ENCODE measurements at regions of chr6 and their contacts with region 1.

Region 1: GRCh38 chr6:105992315-105992961 is 93.7 kb upstream of the PRDM1 start:
- DNase-seq: peak; percentile 77 to 89 (median 85)
- ATAC-seq: peak; percentile 89 to 91
- H3K4me3 Mint-ChIP-seq: peak overlapping the region; percentile 88 to 98 (median 92)
- H3K27ac Mint-ChIP-seq: peak overlapping the region; percentile 83 to 96 (median 89)
- H3K4me1 Mint-ChIP-seq: peaks cover 17 to 35% (median 25%) of the 10 kb centered on the region in 4 donors
- H3K27me3 Mint-ChIP-seq: peaks cover 43 to 76% (median 64%) of the 10 kb centered on the region in 5 donors

Region 2: DNA sequence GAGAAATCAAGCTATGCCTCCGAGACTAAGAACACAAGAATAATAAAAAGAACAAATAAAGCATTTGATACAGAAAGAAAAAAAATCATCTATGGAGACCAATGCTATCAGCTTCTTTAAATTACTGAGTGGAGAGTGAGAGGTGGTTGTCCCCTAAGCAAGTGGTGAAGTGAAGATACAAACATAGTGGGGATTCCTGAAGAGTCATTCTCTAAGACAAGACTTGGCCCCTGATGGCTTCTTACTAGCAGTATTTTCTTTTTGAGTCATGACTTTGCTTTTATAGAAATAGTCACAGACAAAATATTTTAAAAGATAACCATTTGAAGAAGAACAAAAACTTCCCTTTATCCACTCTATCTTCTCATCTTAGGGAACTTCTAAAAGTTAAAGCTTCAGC is 167.7 kb before region 1 on chr6:
- POLR2A ChIA-PET with region 1: no interaction called
- DNase-seq: no peak
- ATAC-seq: no peak
- H3K4me3 Mint-ChIP-seq: no peak overlapping the region
- H3K27ac Mint-ChIP-seq: no peak overlapping the region
- H3K4me1 Mint-ChIP-seq: no peaks in the 10 kb centered on the region
- H3K27me3 Mint-ChIP-seq: peaks cover 0 to 3% (median 2%) of the 10 kb centered on the region in 5 donors

Region 3: DNA sequence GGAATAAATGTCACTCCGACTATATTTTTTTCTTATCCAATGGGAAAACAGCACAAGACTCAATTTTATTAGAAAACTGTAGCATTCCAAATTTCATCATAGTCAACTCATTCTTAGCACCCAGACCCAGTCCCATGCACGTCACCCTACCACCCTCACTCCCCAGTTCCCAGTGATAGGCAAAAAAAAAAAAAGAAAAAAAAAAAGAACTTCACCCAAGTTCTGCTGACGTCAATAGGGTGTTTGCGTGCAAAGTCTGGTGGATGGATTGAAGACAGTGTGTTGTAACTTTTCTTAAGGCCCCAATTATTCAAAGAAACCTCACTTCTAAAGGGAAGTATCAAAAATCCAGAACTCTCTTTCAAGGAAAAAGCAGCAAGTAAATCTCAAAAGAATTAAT is 120.2 kb before region 1 on chr6:
- POLR2A ChIA-PET with region 1: no interaction called
- DNase-seq: no peak
- ATAC-seq: no peak
- H3K4me3 Mint-ChIP-seq: no peak overlapping the region
- H3K27ac Mint-ChIP-seq: no peak overlapping the region
- H3K4me1 Mint-ChIP-seq: peaks cover 0 to 43% (median 0%) of the 10 kb centered on the region in 4 donors
- H3K27me3 Mint-ChIP-seq: peaks cover 14 to 45% (median 21%) of the 10 kb centered on the region in 5 donors

Region 4: GRCh38 chr6:105920071-105920470 is 72.4 kb before region 1 on chr6:
- POLR2A ChIA-PET with region 1: no interaction called
- DNase-seq: no peak
- ATAC-seq: no peak
- H3K4me3 Mint-ChIP-seq: no peak overlapping the region
- H3K27ac Mint-ChIP-seq: no peak overlapping the region
- H3K4me1 Mint-ChIP-seq: no peaks in the 10 kb centered on the region
- H3K27me3 Mint-ChIP-seq: peaks cover 6 to 11% (median 7%) of the 10 kb centered on the region in 5 donors

Region 5: DNA sequence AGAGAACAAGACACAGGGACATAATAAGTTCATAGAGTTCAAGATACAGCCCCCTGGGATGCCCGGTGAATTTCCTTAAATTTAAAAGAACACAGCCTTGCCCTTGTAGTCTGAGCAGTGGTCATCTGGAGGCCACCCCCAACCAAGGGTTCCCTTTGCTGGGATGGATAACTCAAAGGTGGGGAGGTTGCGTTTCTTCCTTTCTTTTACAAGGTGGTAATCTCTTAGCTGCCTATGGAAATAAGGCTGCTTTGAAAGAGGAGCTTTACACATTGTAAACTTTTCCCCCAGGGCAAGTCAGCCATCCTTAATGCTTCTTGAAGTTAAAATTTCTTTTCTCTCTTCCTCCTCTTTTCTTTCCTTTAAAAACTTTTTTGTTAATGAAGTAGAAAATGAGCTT is 22.5 kb after region 1 on chr6:
- POLR2A ChIA-PET with region 1: no interaction called
- DNase-seq: no peak
- ATAC-seq: no peak
- H3K4me3 Mint-ChIP-seq: no peak overlapping the region
- H3K27ac Mint-ChIP-seq: no peak overlapping the region
- H3K4me1 Mint-ChIP-seq: peaks cover 0 to 2% (median under 1%) of the 10 kb centered on the region in 4 donors
- H3K27me3 Mint-ChIP-seq: peaks cover 3 to 17% (median 14%) of the 10 kb centered on the region in 5 donors

Region 6: GRCh38 chr6:106117579-106117978 is 125.1 kb after region 1 on chr6:
- POLR2A ChIA-PET with region 1: interaction called, 10 read pairs
- DNase-seq: peak in 9 of 10 donors; percentile 41 to 88 (median 76)
- ATAC-seq: peak; percentile 96 to 97
- H3K4me3 Mint-ChIP-seq: peak overlapping the region; percentile 17 to 74 (median 48)
- H3K27ac Mint-ChIP-seq: peak overlapping the region; percentile 26 to 95 (median 80)
- H3K4me1 Mint-ChIP-seq: peaks cover 12 to 58% (median 45%) of the 10 kb centered on the region in 4 donors
- H3K27me3 Mint-ChIP-seq: peaks cover 14 to 68% (median 21%) of the 10 kb centered on the region in 5 donors